ENCODE measurements at regions of chr5 and their contacts with region 1.

Region 1: DNA sequence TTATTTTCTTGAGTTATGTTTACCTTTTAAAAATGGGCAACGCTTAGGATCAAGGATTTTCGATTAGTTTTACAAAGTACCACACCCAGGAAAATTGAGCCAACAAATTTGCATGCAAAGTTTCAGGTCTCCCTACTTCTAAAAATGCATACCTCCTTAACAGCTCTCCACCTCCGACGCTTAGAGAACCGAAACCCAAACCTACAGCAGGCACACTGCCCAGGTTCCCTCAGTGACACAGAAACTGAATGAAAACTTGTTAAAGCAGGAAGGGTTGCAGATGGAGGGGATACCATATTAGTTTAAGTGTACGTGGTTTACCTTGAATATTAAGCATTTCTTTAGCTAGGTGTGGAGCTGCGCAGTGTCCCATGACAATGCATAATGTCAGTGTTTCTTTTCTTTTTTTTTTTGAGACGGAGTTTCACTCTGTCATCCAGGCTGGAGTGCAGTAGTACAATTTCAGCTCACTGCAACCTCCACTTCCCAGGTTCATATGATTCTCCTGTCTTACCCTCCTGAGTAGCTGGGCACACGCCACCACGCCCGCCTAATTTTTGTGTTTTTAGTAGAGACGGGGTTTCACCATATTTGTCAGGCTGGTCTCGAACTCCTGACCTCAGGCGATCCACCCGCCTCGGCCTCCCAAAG is 1.6 kb upstream of the SUB1 start:
- DNase-seq: no peak
- H3K4me3 ChIP-seq: peak overlapping the region in 2 of 8 donors; percentile 4 to 47
- H3K27ac ChIP-seq: peak overlapping the region in 6 of 8 donors; percentile 17 to 100 (median 90)
- H3K4me1 ChIP-seq: peaks cover 43 to 77% (median 72%) of the 10 kb centered on the region in 6 donors
- H3K27me3 ChIP-seq: no peaks in the 10 kb centered on the region
- CTCF ChIP-seq: no peak
- POLR2A ChIP-seq: no peak

Region 2: DNA sequence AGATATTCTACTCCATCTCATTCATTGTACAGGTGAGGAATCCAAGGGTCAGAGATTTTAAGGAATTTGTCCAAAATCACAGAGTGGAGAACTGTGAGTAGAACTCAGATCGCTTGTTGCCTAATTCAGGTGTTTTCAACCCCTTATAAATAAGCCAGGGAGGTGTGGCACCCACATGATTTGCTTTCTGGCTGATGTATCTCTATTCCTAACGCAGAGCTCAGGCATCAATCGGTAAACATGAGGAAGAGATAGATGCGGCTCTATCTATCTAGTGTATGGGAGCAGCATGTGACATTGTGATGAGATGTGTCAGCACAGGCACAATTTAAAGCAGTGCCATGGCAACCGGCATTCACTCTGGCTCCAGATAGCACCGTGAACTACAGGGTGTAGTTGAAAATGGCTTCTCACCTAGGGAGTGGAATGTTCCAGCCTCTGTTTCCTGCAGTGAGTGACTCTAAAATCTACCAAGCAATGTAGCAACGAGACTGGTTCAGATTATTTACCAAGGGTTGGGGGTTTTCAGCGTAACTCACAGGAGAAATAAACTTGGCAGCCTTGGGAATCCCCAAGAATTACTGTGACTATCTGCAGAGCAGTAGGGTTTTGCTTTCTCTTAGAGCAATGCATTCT is 51.7 kb before region 1 on chr5:
- intact Hi-C with region 1: loop called (anchors 5 kb)
- DNase-seq: no peak
- H3K4me3 ChIP-seq: peak overlapping the region; percentile 5 to 65 (median 26)
- H3K27ac ChIP-seq: peak overlapping the region in 7 of 8 donors; percentile 7 to 83 (median 67)
- H3K4me1 ChIP-seq: peaks cover 0 to 30% (median 14%) of the 10 kb centered on the region in 6 donors
- H3K27me3 ChIP-seq: no peaks in the 10 kb centered on the region
- CTCF ChIP-seq: no peak
- POLR2A ChIP-seq: no peak